ENCODE measurements at regions of chr6 and their contacts with region 1.

Region 1: DNA sequence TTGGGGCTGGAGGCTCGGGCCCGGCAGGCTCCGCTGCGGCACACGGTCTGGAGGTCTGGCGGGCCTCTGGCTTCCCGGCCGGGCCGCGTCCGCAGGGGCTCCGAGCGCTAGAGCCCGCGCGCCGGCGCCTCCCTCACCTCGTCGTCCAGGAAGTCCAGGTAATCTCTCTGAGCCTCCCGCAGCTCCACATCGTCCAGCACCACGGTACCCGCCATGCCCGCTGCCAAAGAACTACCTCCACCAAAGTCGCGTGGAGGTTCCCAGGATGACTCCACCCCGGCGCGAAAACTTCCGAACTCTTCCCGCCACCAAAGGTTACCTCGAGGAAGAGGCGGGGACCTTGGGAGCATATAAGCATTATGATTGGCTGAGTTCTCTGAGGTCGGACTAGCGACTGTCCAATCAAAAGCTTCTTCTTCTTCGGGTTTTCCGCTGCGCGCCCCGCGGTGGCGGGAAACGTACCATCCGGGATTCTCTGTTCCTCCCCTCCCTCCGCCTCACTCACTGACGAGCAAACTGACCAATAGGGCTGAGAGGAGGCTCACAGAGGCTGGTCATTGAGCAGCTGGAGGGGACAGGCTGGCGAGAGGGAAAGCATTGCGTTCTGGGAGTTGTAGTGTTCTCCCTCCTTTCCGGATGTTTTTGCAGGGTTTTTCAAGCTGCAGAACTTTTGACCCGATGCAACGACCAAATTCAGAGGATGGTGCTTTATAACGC is at the start of gene MCM3:
- DNase-seq: peak; percentile 100
- ATAC-seq: peak; percentile 99
- H3K4me3 ChIP-seq: peak within 1 kb of the TSS; percentile 80 to 94 (median 90)
- H3K27ac ChIP-seq: peak within 1 kb of the TSS; percentile 86
- H3K4me1 ChIP-seq: peaks cover 67% of the 10 kb centered on the region
- H3K27me3 ChIP-seq: no peaks in the 10 kb centered on the region; a peak in 1 of 5 replicates
- CTCF ChIP-seq: peak; percentile 14; the same call in 1 of the 2 replicates
- EP300 ChIP-seq: peak in 1 of 2 experiments; percentile 15; a peak in 1 of 4 replicates
- POLR2A ChIP-seq: peak; percentile 71 to 94
- RAD21 ChIP-seq: peak; percentile 69
- total RNA-seq, gene MCM3: 288 and 336 TPM in 2 replicates

Region 2: DNA sequence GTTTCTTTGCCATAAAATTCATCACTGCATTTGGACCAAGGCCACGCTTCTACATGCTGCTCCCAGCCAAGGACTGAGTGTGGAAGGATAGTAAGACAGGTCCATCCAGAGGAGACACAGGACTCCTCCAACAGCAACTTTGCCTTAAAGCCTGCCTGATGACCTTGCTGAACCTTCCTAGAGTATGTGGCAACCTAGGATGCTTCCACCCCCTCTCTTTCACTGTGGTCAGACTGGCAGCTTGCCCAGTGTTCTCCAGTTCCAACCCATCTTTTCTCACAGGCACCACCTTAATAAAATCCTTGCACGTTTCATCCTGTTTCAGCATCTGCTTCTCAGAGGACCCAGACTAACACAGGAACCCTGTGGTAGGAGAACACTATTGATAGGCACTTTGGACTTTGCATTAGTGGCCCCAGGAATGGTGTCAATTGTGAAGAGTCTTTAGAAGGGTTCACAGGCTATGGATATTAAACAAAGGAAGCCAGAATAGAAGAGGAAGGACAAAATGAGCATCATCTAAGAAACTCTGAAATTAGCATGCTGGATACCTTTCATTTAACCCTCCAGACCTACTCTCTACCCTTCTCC is 194.8 kb before region 1 on chr6:
- CTCF ChIA-PET with region 1: no interaction called
- POLR2A ChIA-PET with region 1: no interaction called
- in situ Hi-C with region 1: no loop called
- intact Hi-C with region 1: no loop called
- DNase-seq: no peak
- ATAC-seq: no peak
- H3K4me3 ChIP-seq: no peak overlapping the region
- H3K27ac ChIP-seq: no peak overlapping the region
- H3K4me1 ChIP-seq: peaks cover 24% of the 10 kb centered on the region
- H3K27me3 ChIP-seq: no peaks in the 10 kb centered on the region
- CTCF ChIP-seq: no peak
- EP300 ChIP-seq: no peak
- POLR2A ChIP-seq: no peak
- RAD21 ChIP-seq: no peak

Region 3: DNA sequence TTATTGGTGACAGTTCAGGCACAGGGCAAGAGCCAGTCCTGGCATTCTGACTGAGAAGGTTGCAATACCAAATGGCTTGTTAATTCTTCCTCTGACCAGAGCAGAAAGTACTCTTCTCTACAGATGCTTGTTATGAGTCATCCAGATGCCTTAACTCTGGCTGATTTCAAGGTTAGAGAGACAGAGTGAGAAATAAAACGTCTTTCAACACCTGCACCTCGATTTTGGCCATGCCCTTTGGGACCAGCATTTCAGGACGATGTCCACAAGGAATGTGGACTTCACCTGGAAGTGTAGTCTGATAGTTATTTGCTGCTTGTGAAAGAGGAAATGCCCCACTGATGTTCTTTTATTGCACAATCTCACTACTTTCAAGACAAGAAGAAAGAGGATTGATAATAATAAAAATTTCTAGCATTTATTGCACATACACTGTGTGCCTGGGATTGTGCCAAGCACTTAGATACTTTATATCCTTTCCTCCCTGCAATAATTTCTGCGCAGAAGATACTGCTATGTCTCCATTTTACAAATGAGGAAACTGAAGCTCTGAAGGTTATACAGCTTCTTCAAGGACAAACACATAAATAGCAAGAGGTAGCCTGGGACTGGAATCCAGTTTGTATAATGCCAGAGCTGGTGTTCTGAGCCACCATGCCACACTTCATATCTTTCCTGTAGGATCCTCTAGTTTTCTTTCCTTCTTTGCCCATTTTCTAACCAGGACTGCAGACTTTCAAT is 33.4 kb after region 1 on chr6:
- CTCF ChIA-PET with region 1: no interaction called
- POLR2A ChIA-PET with region 1: no interaction called
- in situ Hi-C with region 1: no loop called
- intact Hi-C with region 1: no loop called
- DNase-seq: peak; percentile 63
- ATAC-seq: peak; percentile 88
- H3K4me3 ChIP-seq: no peak overlapping the region
- H3K27ac ChIP-seq: no peak overlapping the region
- H3K4me1 ChIP-seq: peaks cover 29% of the 10 kb centered on the region
- H3K27me3 ChIP-seq: no peaks in the 10 kb centered on the region
- CTCF ChIP-seq: no peak
- EP300 ChIP-seq: peak in 1 of 2 experiments; percentile 32; a peak in 1 of 4 replicates
- POLR2A ChIP-seq: no peak
- RAD21 ChIP-seq: no peak

Region 4: DNA sequence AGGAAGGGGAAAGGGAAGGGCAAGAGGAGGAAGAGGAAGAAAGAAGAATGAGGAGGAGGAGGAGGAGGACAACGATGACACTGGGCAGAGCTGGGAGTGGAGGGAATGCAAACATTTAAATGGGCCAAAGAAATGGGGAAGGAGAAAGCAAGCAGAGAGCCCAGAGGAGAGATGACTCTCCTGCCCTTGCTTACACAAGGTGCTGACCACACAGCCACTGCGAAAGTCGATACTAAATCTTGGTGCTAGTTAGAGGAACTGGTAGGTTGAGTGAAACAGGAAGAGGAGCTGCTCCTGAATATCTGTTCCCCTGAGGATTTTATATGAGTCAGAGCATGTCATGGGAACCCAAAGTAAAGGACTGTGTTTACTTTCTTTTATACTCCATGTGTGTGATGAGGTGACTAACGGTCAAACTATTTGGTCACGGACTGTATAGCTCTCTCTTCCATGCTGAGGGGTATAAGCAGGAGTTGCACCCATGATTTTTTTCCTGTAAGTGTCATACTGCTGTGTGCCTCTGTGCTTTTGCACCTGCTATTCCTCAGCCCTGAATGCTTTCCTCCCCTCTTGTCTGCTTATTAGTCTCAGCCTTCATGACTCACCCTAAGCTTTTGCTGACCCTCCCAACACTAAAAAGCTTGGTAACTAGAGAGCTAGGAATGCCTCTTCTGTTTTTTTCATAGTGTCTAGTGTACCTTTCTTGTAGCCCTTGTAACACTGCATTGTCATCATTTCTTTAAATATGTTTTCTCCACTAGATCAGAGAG is 67.8 kb after region 1 on chr6:
- CTCF ChIA-PET with region 1: interaction called, 3 read pairs
- POLR2A ChIA-PET with region 1: interaction called, 13 read pairs
- in situ Hi-C with region 1: no loop called
- intact Hi-C with region 1: loop called (anchors 1 kb)
- DNase-seq: peak; percentile 98
- ATAC-seq: peak; percentile 97
- H3K4me3 ChIP-seq: peak overlapping the region in 2 of 3 experiments; percentile 12 to 22; a peak in 3 of 6 replicates
- H3K27ac ChIP-seq: peak overlapping the region; percentile 55
- H3K4me1 ChIP-seq: peaks cover 58% of the 10 kb centered on the region
- H3K27me3 ChIP-seq: no peaks in the 10 kb centered on the region
- CTCF ChIP-seq: no peak
- EP300 ChIP-seq: peak; percentile 14 to 71; a peak in 3 of 4 replicates
- POLR2A ChIP-seq: no peak
- RAD21 ChIP-seq: no peak

Region 5: GRCh38 chr6:52361945-52362442 is 77.4 kb after region 1 on chr6 and contains the start of gene PAQR8:
- CTCF ChIA-PET with region 1: no interaction called
- POLR2A ChIA-PET with region 1: interaction called, 15 read pairs
- in situ Hi-C with region 1: loop called (anchors 5 kb)
- intact Hi-C with region 1: loop called (anchors 2 kb)
- DNase-seq: no peak
- ATAC-seq: peak; percentile 89
- H3K4me3 ChIP-seq: peak within 1 kb of the TSS; percentile 79 to 100 (median 95)
- H3K27ac ChIP-seq: peak within 1 kb of the TSS; percentile 60
- H3K4me1 ChIP-seq: peaks cover 62% of the 10 kb centered on the region
- H3K27me3 ChIP-seq: no peaks in the 10 kb centered on the region; a peak in 1 of 5 replicates
- CTCF ChIP-seq: no peak
- EP300 ChIP-seq: no peak; a peak in 1 of 4 replicates
- POLR2A ChIP-seq: peak in 1 of 2 experiments; percentile 73; a peak in 2 of 4 replicates
- RAD21 ChIP-seq: peak; percentile 69
- total RNA-seq, gene PAQR8: 26.2 and 37.7 TPM in 2 replicates

Region 6: DNA sequence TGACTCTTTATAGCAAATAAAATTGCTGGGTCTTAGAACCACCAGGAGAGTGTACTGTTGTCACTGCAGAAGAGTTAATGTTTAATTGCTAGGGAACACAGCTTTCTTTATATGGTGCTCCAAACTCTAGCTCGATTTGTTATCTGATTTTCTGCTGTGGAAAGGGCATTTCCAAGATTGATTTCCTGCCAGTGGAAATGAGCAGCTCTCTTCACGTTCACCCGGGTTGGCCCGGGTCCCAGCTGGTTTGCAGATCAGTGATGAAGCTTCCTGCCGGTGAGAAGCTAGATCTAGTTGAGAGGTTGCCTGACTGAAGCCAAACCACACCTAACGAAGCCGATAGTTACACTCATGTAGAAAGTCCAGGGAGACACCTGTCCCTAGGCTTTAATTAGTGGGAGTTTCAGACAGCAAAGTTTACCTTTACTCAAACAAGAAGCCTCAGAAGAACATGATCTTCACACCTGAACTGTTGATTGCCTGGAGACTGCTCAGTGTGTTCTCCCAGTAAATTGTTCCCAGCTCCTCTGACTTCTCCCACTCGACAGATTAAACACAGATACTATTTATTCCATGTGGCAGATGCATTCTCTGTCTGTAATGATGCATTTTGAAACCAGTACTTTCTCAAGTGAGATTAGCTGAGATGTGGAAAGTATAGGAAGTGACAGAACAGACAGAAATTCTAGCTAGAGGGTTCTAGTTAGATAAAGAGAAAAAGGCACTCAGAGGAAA is 105.2 kb after region 1 on chr6:
- CTCF ChIA-PET with region 1: no interaction called
- POLR2A ChIA-PET with region 1: interaction called, 18 read pairs
- in situ Hi-C with region 1: no loop called
- intact Hi-C with region 1: no loop called
- DNase-seq: peak; percentile 94
- ATAC-seq: peak; percentile 94
- H3K4me3 ChIP-seq: peak overlapping the region; percentile 11 to 56 (median 30)
- H3K27ac ChIP-seq: peak overlapping the region; percentile 84
- H3K4me1 ChIP-seq: peaks cover 53% of the 10 kb centered on the region
- H3K27me3 ChIP-seq: no peaks in the 10 kb centered on the region
- CTCF ChIP-seq: peak; percentile 42
- EP300 ChIP-seq: peak in 1 of 2 experiments; percentile 68; a peak in 2 of 4 replicates
- POLR2A ChIP-seq: peak in 1 of 2 experiments; percentile 34; a peak in 2 of 4 replicates
- RAD21 ChIP-seq: no peak

Region 7: GRCh38 chr6:52399511-52400312 is 115.1 kb after region 1 on chr6:
- CTCF ChIA-PET with region 1: interaction called, 74 read pairs
- POLR2A ChIA-PET with region 1: interaction called, 19 read pairs
- in situ Hi-C with region 1: loop called (anchors 5 kb)
- intact Hi-C with region 1: loop called (anchors 1 kb)
- DNase-seq: peak; percentile 77
- ATAC-seq: peak; percentile 88
- H3K4me3 ChIP-seq: no peak overlapping the region
- H3K27ac ChIP-seq: peak overlapping the region; percentile 49
- H3K4me1 ChIP-seq: peaks cover 57% of the 10 kb centered on the region
- H3K27me3 ChIP-seq: no peaks in the 10 kb centered on the region
- CTCF ChIP-seq: peak; percentile 89
- EP300 ChIP-seq: peak in 1 of 2 experiments; percentile 38; a peak in 1 of 4 replicates
- POLR2A ChIP-seq: no peak
- RAD21 ChIP-seq: peak; percentile 94

Region 8: GRCh38 chr6:52537001-52537753 is 252.6 kb after region 1 on chr6:
- CTCF ChIA-PET with region 1: no interaction called
- POLR2A ChIA-PET with region 1: no interaction called
- in situ Hi-C with region 1: no loop called
- intact Hi-C with region 1: no loop called
- DNase-seq: no peak
- ATAC-seq: peak; percentile 17; the same call in 2 of the 3 replicates
- H3K4me3 ChIP-seq: no peak overlapping the region
- H3K27ac ChIP-seq: no peak overlapping the region
- H3K4me1 ChIP-seq: peaks cover 60% of the 10 kb centered on the region
- H3K27me3 ChIP-seq: no peaks in the 10 kb centered on the region
- CTCF ChIP-seq: no peak
- EP300 ChIP-seq: no peak
- POLR2A ChIP-seq: no peak
- RAD21 ChIP-seq: no peak

Region 9: DNA sequence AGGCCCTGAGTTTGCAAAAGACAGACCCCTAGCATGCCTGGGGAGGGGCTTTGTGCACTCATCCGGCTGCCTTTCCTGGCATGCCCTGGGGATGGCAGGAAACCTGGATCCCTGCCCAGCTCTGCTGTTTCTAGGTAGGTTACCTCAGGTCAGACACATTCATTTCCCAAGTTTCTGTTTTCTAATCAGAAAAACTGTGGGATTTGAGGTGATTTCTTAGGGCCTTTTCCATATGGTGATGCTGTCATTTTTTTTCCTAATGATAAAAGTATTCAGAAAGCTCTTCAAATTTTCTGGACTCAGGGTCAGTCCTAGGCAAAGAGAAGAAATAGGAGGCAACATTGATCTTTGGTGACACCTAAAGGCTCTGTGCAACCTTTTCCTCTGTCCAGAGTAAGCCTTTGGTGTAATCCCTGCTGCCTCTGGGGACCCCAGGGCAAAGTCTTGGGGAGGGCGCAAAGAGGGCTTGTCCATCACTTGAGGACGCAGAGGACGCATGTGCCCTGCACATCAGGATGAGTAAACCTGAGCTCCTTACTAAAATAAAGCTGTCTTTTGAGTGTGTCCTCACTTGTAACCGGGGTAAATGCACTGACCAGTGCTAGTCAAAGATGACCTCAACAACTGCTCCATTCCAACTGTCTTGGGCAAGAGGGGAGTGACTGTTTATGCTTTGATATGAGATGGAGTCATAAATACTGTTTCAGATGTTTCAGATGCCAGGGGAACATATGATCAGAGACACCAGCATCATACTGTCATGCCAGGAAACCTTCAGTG is 305.7 kb after region 1 on chr6:
- CTCF ChIA-PET with region 1: no interaction called
- POLR2A ChIA-PET with region 1: no interaction called
- in situ Hi-C with region 1: no loop called
- intact Hi-C with region 1: loop called (anchors 5 kb)
- DNase-seq: peak; percentile 77
- ATAC-seq: peak; percentile 62
- H3K4me3 ChIP-seq: peak overlapping the region in 1 of 3 experiments; percentile 33; a peak in 2 of 6 replicates
- H3K27ac ChIP-seq: peak overlapping the region; percentile 93
- H3K4me1 ChIP-seq: peaks cover 71% of the 10 kb centered on the region
- H3K27me3 ChIP-seq: no peaks in the 10 kb centered on the region
- CTCF ChIP-seq: peak; percentile 86
- EP300 ChIP-seq: peak in 1 of 2 experiments; percentile 29; a peak in 2 of 4 replicates
- POLR2A ChIP-seq: no peak
- RAD21 ChIP-seq: peak; percentile 78

Region 10: GRCh38 chr6:52664186-52664990 is 379.8 kb after region 1 on chr6:
- CTCF ChIA-PET with region 1: interaction called, 5 read pairs
- POLR2A ChIA-PET with region 1: no interaction called
- in situ Hi-C with region 1: loop called (anchors 10 kb)
- intact Hi-C with region 1: loop called (anchors 2 kb)
- DNase-seq: peak; percentile 97
- ATAC-seq: peak; percentile 96
- H3K4me3 ChIP-seq: peak overlapping the region; percentile 72 to 89 (median 89)
- H3K27ac ChIP-seq: peak overlapping the region; percentile 64
- H3K4me1 ChIP-seq: peaks cover 50% of the 10 kb centered on the region
- H3K27me3 ChIP-seq: no peaks in the 10 kb centered on the region; a peak in 1 of 5 replicates
- CTCF ChIP-seq: no peak
- EP300 ChIP-seq: no peak; a peak in 1 of 4 replicates
- POLR2A ChIP-seq: peak; percentile 96 to 98
- RAD21 ChIP-seq: peak; percentile 40

Measured in HepG2 (cell line).